CD4-positive, alpha-beta T cell (primary cell): ENCODE measurements at regions of chr6 and their contacts with region 1.

Region 1: DNA sequence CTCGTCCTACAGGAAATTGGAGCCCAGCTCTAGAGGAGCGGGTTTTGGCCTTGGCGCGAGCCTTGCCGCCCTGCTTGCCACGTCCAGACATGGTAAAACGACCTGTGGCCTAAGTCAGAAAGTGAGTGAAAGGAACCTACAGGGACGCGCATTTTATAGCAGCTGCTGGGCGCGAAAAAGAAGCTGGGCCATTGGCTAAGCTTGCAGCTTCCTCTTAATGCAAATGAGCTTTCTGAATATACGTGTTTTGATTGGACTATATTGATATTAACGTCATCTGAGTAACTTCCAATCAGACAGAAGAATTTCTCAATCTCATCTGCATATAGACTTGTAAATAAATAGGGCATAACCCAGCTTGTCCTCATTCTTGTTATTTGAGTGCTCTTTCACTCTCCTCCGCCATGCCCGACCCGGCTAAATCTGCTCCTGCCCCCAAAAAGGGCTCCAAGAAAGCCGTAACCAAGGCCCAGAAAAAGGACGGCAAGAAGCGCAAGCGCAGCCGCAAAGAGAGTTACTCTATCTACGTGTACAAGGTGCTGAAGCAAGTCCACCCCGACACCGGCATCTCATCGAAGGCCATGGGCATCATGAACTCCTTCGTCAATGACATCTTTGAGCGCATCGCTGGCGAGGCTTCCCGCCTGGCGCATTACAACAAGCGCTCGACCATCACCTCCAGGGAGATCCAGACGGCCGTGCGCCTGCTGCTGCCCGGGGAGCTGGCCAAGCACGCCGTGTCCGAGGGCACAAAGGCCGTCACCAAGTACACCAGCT is 18.9 kb downstream of the OR2B2 start:
- DNase-seq: peak; percentile 76 to 98 (median 85)
- ATAC-seq: peak; percentile 73
- H3K4me3 ChIP-seq: peak overlapping the region; percentile 74
- H3K4me3 Mint-ChIP-seq: no peak overlapping the region
- H3K27ac ChIP-seq: peak overlapping the region; percentile 84 to 86
- H3K27ac Mint-ChIP-seq: no peak overlapping the region
- H3K4me1 ChIP-seq: peaks cover 49% of the 10 kb centered on the region
- H3K4me1 Mint-ChIP-seq: peaks cover 29% of the 10 kb centered on the region
- H3K27me3 ChIP-seq: no peaks in the 10 kb centered on the region
- H3K27me3 Mint-ChIP-seq: no peaks in the 10 kb centered on the region
- CTCF ChIP-seq: no peak

Region 2: DNA sequence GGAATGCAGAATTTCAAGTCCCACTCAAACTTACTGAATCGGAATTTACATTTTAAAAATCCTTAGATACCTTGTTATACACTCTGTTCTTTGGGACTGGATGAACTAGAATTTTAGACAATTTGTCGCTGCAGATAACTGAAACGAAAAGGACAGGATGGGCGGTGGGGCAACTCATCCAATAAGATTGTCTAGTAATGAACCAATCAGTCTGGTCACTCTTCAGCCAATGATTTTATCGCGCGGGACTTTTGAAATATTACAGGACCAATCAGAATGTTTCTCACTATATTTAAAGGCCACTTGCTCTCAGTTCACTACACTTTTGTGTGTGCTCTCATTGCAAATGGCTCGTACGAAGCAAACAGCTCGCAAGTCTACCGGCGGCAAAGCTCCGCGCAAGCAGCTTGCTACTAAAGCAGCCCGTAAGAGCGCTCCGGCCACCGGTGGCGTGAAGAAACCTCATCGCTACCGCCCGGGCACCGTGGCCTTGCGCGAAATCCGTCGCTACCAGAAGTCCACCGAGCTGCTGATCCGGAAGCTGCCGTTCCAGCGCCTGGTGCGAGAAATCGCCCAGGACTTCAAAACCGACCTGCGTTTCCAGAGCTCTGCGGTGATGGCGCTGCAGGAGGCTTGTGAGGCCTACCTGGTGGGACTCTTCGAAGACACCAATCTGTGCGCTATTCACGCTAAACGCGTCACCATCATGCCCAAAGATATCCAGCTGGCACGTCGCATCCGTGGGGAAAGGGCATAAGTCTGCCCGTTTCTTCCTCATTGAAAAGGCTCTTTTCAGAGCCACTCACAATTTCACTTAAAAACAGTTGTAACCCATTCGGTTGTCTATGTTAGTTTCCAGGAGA is 1848.0 kb before region 1 on chr6:
- CTCF ChIA-PET with region 1: no interaction called
- POLR2A ChIA-PET with region 1: interaction called, 32 read pairs
- intact Hi-C with region 1: loop called in 1 of 2 experiments (anchors 5 kb)
- DNase-seq: peak; percentile 49 to 96 (median 74)
- ATAC-seq: peak; percentile 55
- H3K4me3 ChIP-seq: peak overlapping the region; percentile 70
- H3K4me3 Mint-ChIP-seq: peak overlapping the region; percentile 97
- H3K27ac ChIP-seq: peak overlapping the region; percentile 71 to 91
- H3K27ac Mint-ChIP-seq: peak overlapping the region; percentile 94
- H3K4me1 ChIP-seq: peaks cover 21% of the 10 kb centered on the region
- H3K4me1 Mint-ChIP-seq: peaks cover 28% of the 10 kb centered on the region
- H3K27me3 ChIP-seq: no peaks in the 10 kb centered on the region
- H3K27me3 Mint-ChIP-seq: no peaks in the 10 kb centered on the region
- CTCF ChIP-seq: no peak

Region 3: GRCh38 chr6:26234421-26235296 is 1658.6 kb before region 1 on chr6:
- CTCF ChIA-PET with region 1: no interaction called
- POLR2A ChIA-PET with region 1: interaction called, 29 read pairs
- intact Hi-C with region 1: no loop called
- DNase-seq: peak; percentile 46 to 96 (median 67)
- ATAC-seq: peak; percentile 73
- H3K4me3 ChIP-seq: peak overlapping the region; percentile 66
- H3K4me3 Mint-ChIP-seq: peak overlapping the region; percentile 100
- H3K27ac ChIP-seq: peak overlapping the region; percentile 78 to 87
- H3K27ac Mint-ChIP-seq: peak overlapping the region; percentile 99
- H3K4me1 ChIP-seq: peaks cover 19% of the 10 kb centered on the region
- H3K4me1 Mint-ChIP-seq: peaks cover 42% of the 10 kb centered on the region
- H3K27me3 ChIP-seq: no peaks in the 10 kb centered on the region
- H3K27me3 Mint-ChIP-seq: peaks cover 8% of the 10 kb centered on the region
- CTCF ChIP-seq: no peak

Region 4: DNA sequence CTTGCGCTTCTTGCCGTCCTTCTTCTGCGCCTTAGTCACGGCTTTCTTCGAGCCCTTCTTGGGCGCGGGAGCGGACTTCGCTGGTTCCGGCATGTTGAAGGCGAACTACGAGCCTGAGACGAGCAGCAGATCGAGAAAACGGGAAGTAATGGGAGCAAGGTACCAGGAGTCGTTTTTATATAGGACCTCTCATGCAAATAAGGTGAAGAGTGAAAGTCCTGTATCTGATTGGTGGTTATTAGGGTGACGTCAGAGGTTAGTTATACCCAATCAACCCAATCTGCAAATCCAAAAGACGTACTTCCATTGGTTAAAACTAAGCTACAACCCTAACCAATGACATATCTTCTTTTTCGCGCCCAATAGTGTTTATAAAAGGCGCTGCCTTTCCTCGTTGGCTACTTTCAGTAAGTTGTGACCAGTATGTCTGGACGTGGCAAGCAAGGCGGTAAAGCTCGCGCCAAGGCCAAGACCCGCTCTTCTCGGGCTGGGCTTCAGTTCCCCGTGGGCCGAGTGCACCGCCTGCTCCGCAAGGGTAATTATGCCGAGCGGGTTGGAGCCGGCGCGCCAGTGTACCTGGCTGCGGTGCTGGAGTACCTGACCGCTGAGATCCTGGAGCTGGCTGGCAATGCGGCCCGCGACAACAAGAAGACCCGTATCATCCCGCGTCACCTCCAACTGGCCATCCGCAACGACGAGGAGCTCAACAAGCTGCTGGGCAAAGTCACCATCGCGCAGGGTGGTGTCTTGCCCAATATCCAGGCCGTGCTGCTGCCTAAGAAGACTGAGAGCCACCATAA is 746.3 kb before region 1 on chr6:
- CTCF ChIA-PET with region 1: no interaction called
- POLR2A ChIA-PET with region 1: interaction called, 139 read pairs
- intact Hi-C with region 1: loop called in 1 of 2 experiments (anchors 1 kb)
- DNase-seq: peak; percentile 61 to 99 (median 72)
- ATAC-seq: peak; percentile 86
- H3K4me3 ChIP-seq: peak overlapping the region; percentile 69
- H3K4me3 Mint-ChIP-seq: no peak overlapping the region
- H3K27ac ChIP-seq: peak overlapping the region; percentile 84 to 97
- H3K27ac Mint-ChIP-seq: no peak overlapping the region
- H3K4me1 ChIP-seq: peaks cover 17% of the 10 kb centered on the region
- H3K4me1 Mint-ChIP-seq: peaks cover 11% of the 10 kb centered on the region
- H3K27me3 ChIP-seq: no peaks in the 10 kb centered on the region
- H3K27me3 Mint-ChIP-seq: no peaks in the 10 kb centered on the region
- CTCF ChIP-seq: no peak

Region 5: GRCh38 chr6:27479319-27480182 is 413.7 kb before region 1 on chr6:
- CTCF ChIA-PET with region 1: no interaction called
- POLR2A ChIA-PET with region 1: interaction called, 33 read pairs
- intact Hi-C with region 1: loop called in 1 of 2 experiments (anchors 2 kb)
- DNase-seq: peak; percentile 82 to 94 (median 90)
- ATAC-seq: peak; percentile 71
- H3K4me3 ChIP-seq: peak overlapping the region; percentile 62
- H3K4me3 Mint-ChIP-seq: no peak overlapping the region
- H3K27ac ChIP-seq: peak overlapping the region; percentile 93 to 94
- H3K27ac Mint-ChIP-seq: no peak overlapping the region
- H3K4me1 ChIP-seq: peaks cover 16% of the 10 kb centered on the region
- H3K4me1 Mint-ChIP-seq: peaks cover 3% of the 10 kb centered on the region
- H3K27me3 ChIP-seq: no peaks in the 10 kb centered on the region
- H3K27me3 Mint-ChIP-seq: no peaks in the 10 kb centered on the region
- CTCF ChIP-seq: no peak

Region 6: GRCh38 chr6:27809939-27810767 is 83.1 kb before region 1 on chr6:
- CTCF ChIA-PET with region 1: interaction called, 36 read pairs
- POLR2A ChIA-PET with region 1: interaction called, 519 read pairs
- intact Hi-C with region 1: loop called (anchors 1 to 2 kb)
- DNase-seq: peak; percentile 63 to 98 (median 75)
- ATAC-seq: peak; percentile 61
- H3K4me3 ChIP-seq: peak overlapping the region; percentile 64
- H3K4me3 Mint-ChIP-seq: peak overlapping the region; percentile 95
- H3K27ac ChIP-seq: peak overlapping the region; percentile 69 to 81
- H3K27ac Mint-ChIP-seq: peak overlapping the region; percentile 96
- H3K4me1 ChIP-seq: peaks cover 39% of the 10 kb centered on the region
- H3K4me1 Mint-ChIP-seq: peaks cover 68% of the 10 kb centered on the region
- H3K27me3 ChIP-seq: no peaks in the 10 kb centered on the region
- H3K27me3 Mint-ChIP-seq: no peaks in the 10 kb centered on the region
- CTCF ChIP-seq: no peak

Region 7: GRCh38 chr6:28355743-28356665 is 462.8 kb after region 1 on chr6:
- CTCF ChIA-PET with region 1: no interaction called
- POLR2A ChIA-PET with region 1: interaction called, 3 read pairs
- intact Hi-C with region 1: loop called in 1 of 2 experiments (anchors 5 kb)
- DNase-seq: peak; percentile 26 to 84 (median 42)
- ATAC-seq: peak; percentile 93
- H3K4me3 ChIP-seq: peak overlapping the region; percentile 64
- H3K4me3 Mint-ChIP-seq: peak overlapping the region; percentile 90
- H3K27ac ChIP-seq: no peak overlapping the region
- H3K27ac Mint-ChIP-seq: peak overlapping the region; percentile 22
- H3K4me1 ChIP-seq: peaks cover 21% of the 10 kb centered on the region
- H3K4me1 Mint-ChIP-seq: peaks cover 42% of the 10 kb centered on the region
- H3K27me3 ChIP-seq: no peaks in the 10 kb centered on the region
- H3K27me3 Mint-ChIP-seq: no peaks in the 10 kb centered on the region
- CTCF ChIP-seq: peak; percentile 77